Thyroid gland (tissue), 4 donors: ENCODE measurements at regions of chr1 and their contacts with region 1.

Region 1: DNA sequence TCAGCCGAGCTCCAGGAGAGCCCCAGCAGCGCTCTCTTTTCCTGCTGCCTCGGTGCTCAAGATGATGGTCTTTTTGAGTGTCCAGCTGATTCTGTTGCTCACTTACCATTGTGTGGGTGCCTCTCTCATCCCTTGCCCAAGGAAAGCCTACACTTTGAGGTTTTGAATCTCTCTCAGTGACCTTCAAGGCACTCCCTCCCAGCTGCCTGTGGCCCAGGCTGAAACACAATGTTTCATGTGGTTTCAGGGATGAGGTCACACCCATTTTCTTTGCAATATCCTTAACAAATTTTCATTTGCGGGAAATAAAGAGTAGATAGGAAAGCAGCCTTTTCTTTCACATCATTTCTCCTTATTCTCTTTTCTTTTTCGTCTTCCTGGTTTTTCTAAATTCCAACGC is 12.6 kb upstream of the MRPS14 start:
- DNase-seq: no peak
- H3K4me3 ChIP-seq: no peak overlapping the region
- H3K27ac ChIP-seq: no peak overlapping the region
- H3K4me1 ChIP-seq: no peaks in the 10 kb centered on the region
- H3K27me3 ChIP-seq: no peaks in the 10 kb centered on the region
- CTCF ChIP-seq: no peak
- POLR2A ChIP-seq: no peak

Region 2: GRCh38 chr1:175129997-175130648 is 94.3 kb after region 1 on chr1:
- intact Hi-C with region 1: loop called (anchors 5 kb)
- DNase-seq: no peak
- H3K4me3 ChIP-seq: no peak overlapping the region
- H3K27ac ChIP-seq: no peak overlapping the region
- H3K4me1 ChIP-seq: peaks cover 0 to 5% of the 10 kb centered on the region in 2 donors
- H3K27me3 ChIP-seq: no peaks in the 10 kb centered on the region
- CTCF ChIP-seq: no peak
- POLR2A ChIP-seq: no peak

Region 3: GRCh38 chr1:175319418-175320230 is 283.8 kb after region 1 on chr1:
- intact Hi-C with region 1: loop called (anchors 10 kb)
- DNase-seq: peak; percentile 69 to 81
- H3K4me3 ChIP-seq: no peak overlapping the region
- H3K27ac ChIP-seq: no peak overlapping the region
- H3K4me1 ChIP-seq: peaks cover 0 to 7% of the 10 kb centered on the region in 2 donors
- H3K27me3 ChIP-seq: no peaks in the 10 kb centered on the region
- CTCF ChIP-seq: peak in 5 of 6 experiments; percentile 62 to 91 (median 82)
- POLR2A ChIP-seq: no peak